Posterior vena cava (tissue), 2 donors: ENCODE measurements at regions of chr12 and their contacts with region 1.

Region 1: DNA sequence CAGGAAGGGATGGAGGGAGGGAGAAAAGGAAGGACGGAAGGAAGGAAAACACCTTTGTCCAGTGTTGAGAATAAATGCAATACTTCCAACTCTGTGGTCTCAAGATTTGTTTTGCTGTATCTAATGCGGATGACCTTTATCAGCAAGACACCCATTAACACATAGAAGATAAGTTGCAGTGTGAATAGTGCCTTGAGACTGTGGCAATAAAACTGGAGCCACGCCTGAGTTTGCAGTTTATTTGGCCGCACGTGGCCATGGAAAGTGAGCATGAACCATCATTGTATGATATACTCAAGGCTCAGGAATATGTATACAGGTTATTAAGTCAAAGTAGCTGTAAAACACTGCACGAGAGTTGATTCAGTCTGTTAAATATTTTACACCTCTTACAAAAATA is 113.6 kb upstream of the EEA1 start:
- DNase-seq: no peak

Region 2: DNA sequence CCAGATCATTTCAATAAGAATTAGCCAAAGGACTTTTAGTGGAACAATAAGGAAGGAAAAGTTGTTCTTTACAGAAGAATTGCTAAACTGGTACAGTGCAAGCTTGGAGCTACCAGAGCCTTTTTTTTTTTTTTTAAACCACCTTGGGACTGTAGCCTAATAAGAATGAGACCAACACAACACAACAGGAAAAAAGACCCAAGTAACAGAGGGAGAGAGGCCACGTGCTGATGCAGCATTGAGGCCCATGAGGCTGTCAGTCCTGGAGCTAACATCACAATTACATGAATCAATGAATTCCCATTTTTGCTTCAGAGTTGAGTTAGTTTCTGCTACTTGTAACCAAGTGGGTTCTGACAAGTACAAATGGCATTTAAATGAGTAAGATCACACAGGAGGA is 35.4 kb after region 1 on chr12:
- intact Hi-C with region 1: loop called in 1 of 2 experiments (anchors 1 kb)
- DNase-seq: no peak

Region 3: GRCh38 chr12:93302331-93303229 is 259.9 kb after region 1 on chr12:
- intact Hi-C with region 1: no loop called
- DNase-seq: no peak